T-cell (primary cell): ENCODE measurements at regions of chr20 and their contacts with region 1.

Region 1: GRCh38 chr20:4956200-4956810 is 45.0 kb downstream of the SLC23A2 start:
- DNase-seq: peak in 3 of 35 experiments; percentile 8 to 81 (median 18)
- ATAC-seq: peak; percentile 63 to 75 (median 72)
- H3K4me3 ChIP-seq: no peak overlapping the region
- H3K4me3 Mint-ChIP-seq: no peak overlapping the region
- H3K27ac ChIP-seq: no peak overlapping the region
- H3K27ac Mint-ChIP-seq: no peak overlapping the region
- H3K4me1 ChIP-seq: peaks cover under 1 to 4% of the 10 kb centered on the region in 2 experiments
- H3K4me1 Mint-ChIP-seq: peaks cover 9 to 10% (median 9%) of the 10 kb centered on the region in 3 donors
- H3K27me3 ChIP-seq: no peaks in the 10 kb centered on the region
- H3K27me3 Mint-ChIP-seq: no peaks in the 10 kb centered on the region

Region 2: GRCh38 chr20:5069141-5069806 is 113.0 kb after region 1 on chr20:
- CTCF ChIA-PET with region 1: interaction called in 1 of 2 experiments, 15 read pairs
- POLR2A ChIA-PET with region 1: no interaction called
- DNase-seq: no peak
- ATAC-seq: no peak
- H3K4me3 ChIP-seq: no peak overlapping the region
- H3K4me3 Mint-ChIP-seq: no peak overlapping the region
- H3K27ac ChIP-seq: no peak overlapping the region
- H3K27ac Mint-ChIP-seq: no peak overlapping the region
- H3K4me1 ChIP-seq: no peaks in the 10 kb centered on the region
- H3K4me1 Mint-ChIP-seq: peaks cover 0 to 9% (median 3%) of the 10 kb centered on the region in 3 donors
- H3K27me3 ChIP-seq: no peaks in the 10 kb centered on the region
- H3K27me3 Mint-ChIP-seq: no peaks in the 10 kb centered on the region

Region 3: GRCh38 chr20:5100684-5101347 is 144.5 kb after region 1 on chr20:
- CTCF ChIA-PET with region 1: interaction called, 4 to 15 read pairs
- POLR2A ChIA-PET with region 1: no interaction called
- DNase-seq: peak; percentile 27 to 85 (median 69)
- ATAC-seq: peak; percentile 75 to 89 (median 79)
- H3K4me3 ChIP-seq: no peak overlapping the region
- H3K4me3 Mint-ChIP-seq: no peak overlapping the region
- H3K27ac ChIP-seq: peak overlapping the region; percentile 45
- H3K27ac Mint-ChIP-seq: peak overlapping the region in 1 of 2 donors; percentile 61
- H3K4me1 ChIP-seq: peaks cover 0 to 3% of the 10 kb centered on the region in 2 experiments
- H3K4me1 Mint-ChIP-seq: peaks cover 9 to 18% (median 13%) of the 10 kb centered on the region in 3 donors
- H3K27me3 ChIP-seq: no peaks in the 10 kb centered on the region
- H3K27me3 Mint-ChIP-seq: no peaks in the 10 kb centered on the region

Region 4: GRCh38 chr20:5156675-5157448 is 200.6 kb after region 1 on chr20:
- CTCF ChIA-PET with region 1: no interaction called
- POLR2A ChIA-PET with region 1: no interaction called
- DNase-seq: no peak
- ATAC-seq: no peak
- H3K4me3 ChIP-seq: no peak overlapping the region
- H3K4me3 Mint-ChIP-seq: no peak overlapping the region
- H3K27ac ChIP-seq: no peak overlapping the region
- H3K27ac Mint-ChIP-seq: peak overlapping the region in 1 of 2 donors; percentile 62
- H3K4me1 ChIP-seq: peaks cover 0 to 7% of the 10 kb centered on the region in 2 experiments
- H3K4me1 Mint-ChIP-seq: peaks cover 66 to 83% (median 79%) of the 10 kb centered on the region in 3 donors
- H3K27me3 ChIP-seq: no peaks in the 10 kb centered on the region
- H3K27me3 Mint-ChIP-seq: no peaks in the 10 kb centered on the region